Pancreas (tissue), 10 donors: ENCODE measurements at regions of chr6 and their contacts with region 1.

Region 1: GRCh38 chr6:75208298-75209183 is 2.7 kb upstream of the COL12A1 start:
- DNase-seq: peak; percentile 67 to 89 (median 85)
- ATAC-seq: peak; percentile 77 to 83 (median 83)
- H3K4me3 ChIP-seq: peak overlapping the region in 1 of 4 donors; percentile 26
- H3K27ac ChIP-seq: no peak overlapping the region
- H3K4me1 ChIP-seq: peaks cover 0 to 18% (median 6%) of the 10 kb centered on the region in 3 donors
- H3K27me3 ChIP-seq: peaks cover 0 to 25% (median 0%) of the 10 kb centered on the region in 4 donors
- CTCF ChIP-seq: peak; percentile 66 to 84 (median 80)

Region 2: GRCh38 chr6:73722318-73723060 is 1486.1 kb before region 1 on chr6:
- intact Hi-C with region 1: loop called in 1 of 3 experiments (anchors 10 kb)
- DNase-seq: no peak
- ATAC-seq: peak in 1 of 4 donors; percentile 42
- H3K4me3 ChIP-seq: no peak overlapping the region
- H3K27ac ChIP-seq: no peak overlapping the region
- H3K4me1 ChIP-seq: no peaks in the 10 kb centered on the region
- H3K27me3 ChIP-seq: no peaks in the 10 kb centered on the region
- CTCF ChIP-seq: no peak

Region 3: DNA sequence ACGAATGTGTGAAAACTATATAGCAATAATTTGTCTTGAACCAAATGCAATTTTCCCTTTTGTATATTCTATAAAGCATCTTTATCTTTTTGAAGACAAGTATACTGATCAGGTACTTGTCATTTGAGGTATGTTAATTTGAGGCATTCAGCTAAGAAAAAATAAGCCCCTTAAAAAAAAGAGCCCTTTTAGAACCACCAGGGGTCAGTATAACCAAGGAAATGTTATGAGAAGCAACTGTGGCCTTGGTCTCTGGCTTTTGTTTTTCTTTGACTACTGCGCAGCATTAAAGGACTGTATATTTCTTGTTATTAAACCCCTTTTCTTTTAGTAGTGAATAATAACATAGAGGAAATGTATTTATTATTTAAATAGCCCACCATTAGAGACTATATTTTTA is 1469.4 kb before region 1 on chr6:
- intact Hi-C with region 1: loop called in 1 of 3 experiments (anchors 5 kb)
- DNase-seq: no peak
- ATAC-seq: peak; percentile 71 to 93 (median 86)
- H3K4me3 ChIP-seq: no peak overlapping the region
- H3K27ac ChIP-seq: no peak overlapping the region
- H3K4me1 ChIP-seq: no peaks in the 10 kb centered on the region
- H3K27me3 ChIP-seq: peaks cover 0 to 4% (median 0%) of the 10 kb centered on the region in 4 donors
- CTCF ChIP-seq: peak; percentile 48 to 68 (median 60)

Region 4: GRCh38 chr6:73747289-73747688 is 1461.3 kb before region 1 on chr6:
- intact Hi-C with region 1: loop called in 1 of 3 experiments (anchors 5 kb)
- DNase-seq: no peak
- ATAC-seq: no peak
- H3K4me3 ChIP-seq: no peak overlapping the region
- H3K27ac ChIP-seq: no peak overlapping the region
- H3K4me1 ChIP-seq: no peaks in the 10 kb centered on the region
- H3K27me3 ChIP-seq: no peaks in the 10 kb centered on the region
- CTCF ChIP-seq: no peak

Region 5: DNA sequence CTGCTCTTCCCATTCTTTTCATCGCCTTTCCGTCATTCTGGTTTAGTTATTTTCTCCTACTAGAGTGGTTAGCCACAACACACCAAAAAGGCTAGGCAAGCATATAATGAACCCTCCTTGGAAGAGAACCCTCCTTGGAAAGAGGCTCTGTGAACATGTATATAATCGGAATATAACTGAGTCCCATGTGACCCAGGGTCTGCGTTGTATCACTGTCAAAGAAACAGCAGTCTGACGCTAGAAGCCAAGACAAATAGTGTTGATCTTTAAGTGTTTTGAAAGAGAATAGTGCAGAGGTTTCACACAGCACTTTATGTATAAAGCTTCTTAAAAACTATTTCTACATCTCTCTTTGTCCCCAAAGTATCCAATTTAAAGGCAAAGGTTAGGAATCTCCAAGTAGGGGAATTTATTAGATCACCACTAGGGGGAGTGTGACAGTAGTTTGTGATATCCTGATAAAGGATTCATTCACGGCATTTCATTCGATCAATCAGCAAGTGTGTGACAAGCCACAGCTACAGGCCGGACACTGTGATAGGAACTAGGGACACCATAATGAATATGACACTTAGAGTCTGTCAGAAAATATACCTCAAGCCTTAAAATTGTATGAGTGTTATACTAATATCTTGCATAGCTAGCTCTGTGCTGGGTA is 1117.3 kb before region 1 on chr6:
- intact Hi-C with region 1: loop called in 1 of 3 experiments (anchors 10 kb)
- DNase-seq: peak in 1 of 6 donors; percentile 16
- ATAC-seq: peak in 3 of 4 donors; percentile 67 to 78 (median 68)
- H3K4me3 ChIP-seq: no peak overlapping the region
- H3K27ac ChIP-seq: no peak overlapping the region
- H3K4me1 ChIP-seq: no peaks in the 10 kb centered on the region
- H3K27me3 ChIP-seq: peaks cover 0 to 9% (median 0%) of the 10 kb centered on the region in 4 donors
- CTCF ChIP-seq: peak in 3 of 4 donors; percentile 42 to 69 (median 64)

Region 6: DNA sequence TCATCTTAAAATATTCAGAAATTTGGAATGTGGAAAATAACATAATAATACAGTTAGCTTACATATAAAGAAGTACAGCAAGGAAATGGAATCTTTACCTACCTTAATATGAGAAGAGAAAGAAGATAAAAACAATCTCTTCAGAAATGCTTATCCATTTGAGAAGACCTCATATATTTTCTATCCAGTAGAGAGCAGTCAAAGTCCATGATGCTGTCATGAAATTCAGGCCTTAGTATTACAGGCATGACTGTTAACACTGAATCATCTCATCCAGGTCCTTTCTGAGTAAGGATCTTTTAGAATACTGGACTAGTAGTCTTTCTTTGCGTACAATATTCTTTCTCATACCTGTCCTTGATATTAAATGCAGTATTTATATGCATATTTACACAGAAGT is 799.1 kb before region 1 on chr6:
- intact Hi-C with region 1: loop called in 1 of 3 experiments (anchors 10 kb)
- DNase-seq: no peak
- ATAC-seq: peak; percentile 73 to 91 (median 85)
- H3K4me3 ChIP-seq: no peak overlapping the region
- H3K27ac ChIP-seq: no peak overlapping the region
- H3K4me1 ChIP-seq: no peaks in the 10 kb centered on the region
- H3K27me3 ChIP-seq: no peaks in the 10 kb centered on the region
- CTCF ChIP-seq: peak in 2 of 4 donors; percentile 23 to 27

Region 7: DNA sequence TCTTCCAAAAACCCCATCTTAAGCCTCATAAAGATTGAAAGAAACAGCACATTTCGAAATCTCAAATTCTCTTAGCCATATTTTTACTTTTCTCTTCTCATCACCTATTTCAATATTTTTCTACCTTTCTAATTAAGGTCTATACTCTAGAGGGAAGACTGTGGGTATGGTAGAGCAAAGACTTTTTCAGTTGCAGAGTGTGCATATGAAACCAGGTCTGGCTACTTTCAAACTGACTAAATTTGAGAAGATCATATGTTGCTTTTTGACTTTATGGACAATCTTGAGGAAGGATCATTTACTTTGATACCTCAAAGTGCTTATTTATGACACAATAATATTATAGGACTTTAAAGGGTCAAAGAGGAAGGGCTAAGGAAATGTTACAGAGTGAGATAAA is 264.3 kb after region 1 on chr6:
- intact Hi-C with region 1: no loop called
- DNase-seq: no peak
- ATAC-seq: no peak
- H3K4me3 ChIP-seq: no peak overlapping the region
- H3K27ac ChIP-seq: no peak overlapping the region
- H3K4me1 ChIP-seq: no peaks in the 10 kb centered on the region
- H3K27me3 ChIP-seq: no peaks in the 10 kb centered on the region
- CTCF ChIP-seq: no peak